B cell (primary cell): ENCODE measurements at regions of chr6 and their contacts with region 1.

Region 1: GRCh38 chr6:149431905-149432775 is 32.1 kb downstream of the SUMO4 start:
- DNase-seq: peak; percentile 87
- ATAC-seq: peak; percentile 92
- H3K4me3 ChIP-seq: no peak overlapping the region
- H3K4me3 Mint-ChIP-seq: peak overlapping the region; percentile 49
- H3K27ac ChIP-seq: no peak overlapping the region
- H3K27ac Mint-ChIP-seq: no peak overlapping the region
- H3K4me1 ChIP-seq: peaks cover 0 to 7% of the 10 kb centered on the region in 2 donors
- H3K4me1 Mint-ChIP-seq: peaks cover 7% of the 10 kb centered on the region
- H3K27me3 ChIP-seq: no peaks in the 10 kb centered on the region
- H3K27me3 Mint-ChIP-seq: no peaks in the 10 kb centered on the region
- CTCF ChIP-seq: peak; percentile 96

Region 2: GRCh38 chr6:149035766-149036165 is 396.4 kb before region 1 on chr6:
- CTCF ChIA-PET with region 1: interaction called, 201 read pairs
- POLR2A ChIA-PET with region 1: no interaction called
- intact Hi-C with region 1: no loop called
- DNase-seq: no peak
- ATAC-seq: no peak
- H3K4me3 ChIP-seq: no peak overlapping the region
- H3K4me3 Mint-ChIP-seq: no peak overlapping the region
- H3K27ac ChIP-seq: no peak overlapping the region
- H3K27ac Mint-ChIP-seq: no peak overlapping the region
- H3K4me1 ChIP-seq: peaks cover 3 to 15% of the 10 kb centered on the region in 2 donors
- H3K4me1 Mint-ChIP-seq: peaks cover 23% of the 10 kb centered on the region
- H3K27me3 ChIP-seq: no peaks in the 10 kb centered on the region
- H3K27me3 Mint-ChIP-seq: no peaks in the 10 kb centered on the region
- CTCF ChIP-seq: no peak

Region 3: DNA sequence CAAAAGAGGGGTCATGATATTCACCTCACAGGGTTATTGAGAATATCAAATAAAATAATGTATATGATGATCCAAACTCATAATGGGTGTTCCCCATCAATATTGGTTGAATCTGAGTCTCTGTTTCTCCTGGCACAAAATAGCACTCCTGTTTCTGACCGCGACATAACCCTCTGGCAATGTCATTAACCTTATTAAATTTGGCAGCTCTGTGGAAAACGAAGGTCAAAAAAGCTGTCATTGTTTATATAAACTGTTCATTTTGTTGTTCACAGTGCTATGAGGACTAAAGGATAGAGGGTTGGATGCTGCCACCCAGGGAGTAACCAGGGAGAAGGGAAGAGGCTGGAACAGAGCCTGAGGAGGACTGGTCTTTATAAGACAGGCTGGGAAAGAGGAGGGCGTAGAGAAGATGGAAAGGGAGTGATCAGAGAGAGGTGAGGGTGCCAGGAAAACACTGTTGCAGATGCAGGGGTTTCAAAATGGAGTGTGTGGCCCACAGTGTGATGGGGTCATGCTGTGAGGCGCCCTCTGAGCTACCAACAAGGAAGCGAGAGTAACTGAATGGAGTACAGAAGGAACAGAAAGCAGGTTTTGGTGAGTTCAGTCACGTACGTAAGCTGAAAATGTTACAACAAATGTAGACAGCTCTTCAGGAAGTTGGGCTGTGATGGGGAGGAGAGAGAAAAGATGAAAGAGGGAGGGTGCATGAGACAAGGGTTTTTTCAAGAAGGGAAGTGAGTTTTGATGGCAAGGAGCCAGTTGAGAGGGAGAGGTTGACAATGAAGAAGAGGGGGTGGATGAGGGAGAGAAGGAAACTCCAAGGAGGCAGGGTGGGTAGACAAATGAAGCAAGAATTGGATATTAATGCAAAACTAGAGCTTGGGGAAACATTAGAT is 366.2 kb before region 1 on chr6:
- CTCF ChIA-PET with region 1: interaction called, 17 read pairs
- POLR2A ChIA-PET with region 1: interaction called, 8 read pairs
- intact Hi-C with region 1: no loop called
- DNase-seq: peak; percentile 88
- ATAC-seq: peak; percentile 96
- H3K4me3 ChIP-seq: no peak overlapping the region
- H3K4me3 Mint-ChIP-seq: peak overlapping the region; percentile 29
- H3K27ac ChIP-seq: peak overlapping the region; percentile 85 to 86
- H3K27ac Mint-ChIP-seq: peak overlapping the region; percentile 87
- H3K4me1 ChIP-seq: peaks cover 21 to 32% of the 10 kb centered on the region in 2 donors
- H3K4me1 Mint-ChIP-seq: peaks cover 35% of the 10 kb centered on the region
- H3K27me3 ChIP-seq: no peaks in the 10 kb centered on the region
- H3K27me3 Mint-ChIP-seq: no peaks in the 10 kb centered on the region
- CTCF ChIP-seq: no peak

Region 4: GRCh38 chr6:149082286-149082707 is 349.8 kb before region 1 on chr6:
- CTCF ChIA-PET with region 1: interaction called, 110 read pairs
- POLR2A ChIA-PET with region 1: no interaction called
- intact Hi-C with region 1: loop called (anchors 1 kb)
- DNase-seq: peak; percentile 82
- ATAC-seq: peak; percentile 77
- H3K4me3 ChIP-seq: no peak overlapping the region
- H3K4me3 Mint-ChIP-seq: no peak overlapping the region
- H3K27ac ChIP-seq: no peak overlapping the region
- H3K27ac Mint-ChIP-seq: no peak overlapping the region
- H3K4me1 ChIP-seq: peaks cover 0 to 3% of the 10 kb centered on the region in 2 donors
- H3K4me1 Mint-ChIP-seq: peaks cover 7% of the 10 kb centered on the region
- H3K27me3 ChIP-seq: no peaks in the 10 kb centered on the region
- H3K27me3 Mint-ChIP-seq: no peaks in the 10 kb centered on the region
- CTCF ChIP-seq: peak; percentile 93

Region 5: DNA sequence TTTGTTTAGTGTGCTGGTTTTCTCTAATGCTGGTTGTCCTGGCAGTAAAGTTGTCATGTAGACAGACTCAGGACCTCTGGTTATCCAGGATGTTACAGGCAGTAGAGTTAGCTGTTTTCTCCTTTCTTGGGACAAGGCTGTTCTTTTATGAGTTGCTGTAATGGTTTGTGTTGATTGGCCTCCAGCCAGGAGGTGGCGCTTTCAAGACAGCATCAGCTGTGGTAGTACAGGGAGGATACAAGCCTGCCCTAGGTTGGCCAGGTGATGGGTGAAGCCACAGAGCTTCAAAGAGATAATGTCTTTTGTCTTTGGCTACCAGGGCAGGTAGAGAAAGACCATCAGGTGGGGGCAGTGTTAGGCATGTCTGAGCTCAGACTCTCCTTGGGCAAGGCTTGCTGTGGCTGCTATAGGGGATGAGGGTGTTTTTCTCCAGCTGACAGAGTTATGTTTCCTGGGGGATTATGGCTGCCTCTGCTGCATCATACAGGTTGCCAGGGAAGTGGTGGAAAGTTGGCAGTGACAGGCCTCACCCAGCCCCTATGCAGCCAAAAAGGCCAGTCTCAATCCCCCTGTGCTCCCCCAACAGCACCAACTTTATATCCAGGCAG is 241.8 kb before region 1 on chr6:
- CTCF ChIA-PET with region 1: interaction called, 114 read pairs
- POLR2A ChIA-PET with region 1: interaction called, 10 read pairs
- intact Hi-C with region 1: no loop called
- DNase-seq: peak; percentile 77
- ATAC-seq: peak; percentile 75
- H3K4me3 ChIP-seq: no peak overlapping the region
- H3K4me3 Mint-ChIP-seq: no peak overlapping the region
- H3K27ac ChIP-seq: no peak overlapping the region
- H3K27ac Mint-ChIP-seq: no peak overlapping the region
- H3K4me1 ChIP-seq: peaks cover 0 to 8% of the 10 kb centered on the region in 2 donors
- H3K4me1 Mint-ChIP-seq: peaks cover 10% of the 10 kb centered on the region
- H3K27me3 ChIP-seq: peaks cover 0 to 3% (median 0%) of the 10 kb centered on the region in 4 experiments
- H3K27me3 Mint-ChIP-seq: no peaks in the 10 kb centered on the region
- CTCF ChIP-seq: peak; percentile 77

Region 6: DNA sequence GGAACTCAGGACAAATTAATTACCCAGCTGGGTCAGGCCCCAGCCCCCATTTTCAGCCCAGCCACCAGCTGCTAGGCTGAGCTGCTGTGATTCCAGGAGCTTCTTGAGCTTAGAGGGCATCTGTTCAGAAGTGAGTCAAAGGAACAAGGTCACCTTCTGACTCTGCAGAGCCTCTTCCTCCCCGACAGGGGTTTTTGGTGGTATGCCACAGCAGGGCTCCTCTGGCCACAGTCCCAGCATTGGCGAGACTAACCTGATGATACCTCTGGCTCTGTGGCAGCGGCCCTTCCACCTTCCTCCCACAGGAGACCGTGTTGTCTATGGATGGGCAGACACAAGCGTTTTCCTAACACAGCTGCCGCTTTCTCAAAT is 12.9 kb after region 1 on chr6:
- CTCF ChIA-PET with region 1: interaction called, 16 read pairs
- POLR2A ChIA-PET with region 1: no interaction called
- intact Hi-C with region 1: no loop called
- DNase-seq: no peak
- ATAC-seq: peak; percentile 10
- H3K4me3 ChIP-seq: no peak overlapping the region
- H3K4me3 Mint-ChIP-seq: no peak overlapping the region
- H3K27ac ChIP-seq: no peak overlapping the region
- H3K27ac Mint-ChIP-seq: peak overlapping the region; percentile 50
- H3K4me1 ChIP-seq: no peaks in the 10 kb centered on the region
- H3K4me1 Mint-ChIP-seq: peaks cover 12% of the 10 kb centered on the region
- H3K27me3 ChIP-seq: no peaks in the 10 kb centered on the region
- H3K27me3 Mint-ChIP-seq: no peaks in the 10 kb centered on the region
- CTCF ChIP-seq: no peak

Region 7: DNA sequence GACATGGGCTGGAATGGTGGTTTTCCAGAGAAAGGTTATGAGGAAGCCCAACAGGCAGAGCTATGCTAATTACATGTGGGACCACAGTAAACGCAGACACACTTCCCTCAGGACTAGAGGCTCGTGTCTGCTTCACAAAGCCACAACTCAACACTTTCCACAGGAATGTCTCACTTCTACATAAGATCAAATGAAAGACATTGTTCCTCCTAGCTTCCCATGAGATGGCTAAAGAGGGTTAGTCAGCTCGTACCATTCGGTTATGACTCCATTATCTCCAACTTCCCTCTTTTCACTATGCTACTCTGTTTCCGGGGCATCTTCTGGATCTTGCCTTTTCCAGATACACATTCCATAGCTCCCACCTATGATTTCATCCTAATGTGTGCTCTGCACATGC is 81.8 kb after region 1 on chr6:
- CTCF ChIA-PET with region 1: interaction called, 104 read pairs
- POLR2A ChIA-PET with region 1: no interaction called
- intact Hi-C with region 1: loop called (anchors 1 kb)
- DNase-seq: no peak
- ATAC-seq: no peak
- H3K4me3 ChIP-seq: no peak overlapping the region
- H3K4me3 Mint-ChIP-seq: no peak overlapping the region
- H3K27ac ChIP-seq: no peak overlapping the region
- H3K27ac Mint-ChIP-seq: peak overlapping the region; percentile 46
- H3K4me1 ChIP-seq: peaks cover 0 to 3% of the 10 kb centered on the region in 2 donors
- H3K4me1 Mint-ChIP-seq: peaks cover 8% of the 10 kb centered on the region
- H3K27me3 ChIP-seq: no peaks in the 10 kb centered on the region
- H3K27me3 Mint-ChIP-seq: no peaks in the 10 kb centered on the region
- CTCF ChIP-seq: no peak

Region 8: GRCh38 chr6:149565527-149566409 is 133.6 kb after region 1 on chr6 and contains the start of gene GINM1:
- CTCF ChIA-PET with region 1: no interaction called
- POLR2A ChIA-PET with region 1: no interaction called
- intact Hi-C with region 1: no loop called
- DNase-seq: peak; percentile 98
- ATAC-seq: peak; percentile 83
- H3K4me3 ChIP-seq: peak within 1 kb of the TSS; percentile 83 to 100 (median 96)
- H3K4me3 Mint-ChIP-seq: peak within 1 kb of the TSS; percentile 99
- H3K27ac ChIP-seq: peak within 1 kb of the TSS; percentile 84 to 92
- H3K27ac Mint-ChIP-seq: peak within 1 kb of the TSS; percentile 98
- H3K4me1 ChIP-seq: peaks cover 13 to 26% of the 10 kb centered on the region in 2 donors
- H3K4me1 Mint-ChIP-seq: peaks cover 23% of the 10 kb centered on the region
- H3K27me3 ChIP-seq: no peaks in the 10 kb centered on the region
- H3K27me3 Mint-ChIP-seq: no peaks in the 10 kb centered on the region
- CTCF ChIP-seq: peak; percentile 77
- total RNA-seq, gene GINM1: 22.1 and 23.0 TPM in 2 replicates